Breast epithelium (tissue), 4 donors: ENCODE measurements at regions of chr2 and their contacts with region 1.

Region 1: DNA sequence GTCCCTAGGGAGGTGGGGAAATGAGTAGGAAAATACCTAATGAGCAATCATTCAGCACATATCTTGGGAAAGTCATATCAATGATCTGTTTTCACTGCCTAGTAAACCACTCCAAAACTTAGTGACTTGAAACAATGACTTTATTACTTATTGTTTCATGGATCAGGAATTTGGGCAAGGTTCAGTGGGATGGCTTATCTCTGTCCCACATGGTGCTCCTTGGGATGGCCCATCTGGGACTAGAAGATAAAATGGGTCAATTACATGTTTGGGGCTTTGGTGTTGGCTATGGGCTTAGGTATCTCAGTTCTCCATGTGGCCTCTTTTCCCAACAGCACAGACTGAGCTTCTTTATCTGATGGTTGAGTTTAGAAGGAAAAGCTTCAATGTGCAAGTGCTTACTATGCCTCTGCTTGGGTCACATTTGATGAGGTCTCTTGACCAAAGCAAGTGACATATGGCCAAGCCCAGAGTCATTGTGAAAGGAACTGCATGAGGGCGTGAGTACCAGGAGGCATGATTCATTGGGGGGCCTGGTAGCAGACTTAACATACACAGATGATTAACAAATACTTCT is 218.1 kb upstream of the TNP1 start:
- DNase-seq: no peak
- H3K4me3 ChIP-seq: no peak overlapping the region
- H3K27ac ChIP-seq: no peak overlapping the region
- H3K4me1 ChIP-seq: no peaks in the 10 kb centered on the region
- H3K27me3 ChIP-seq: no peaks in the 10 kb centered on the region
- CTCF ChIP-seq: no peak
- POLR2A ChIP-seq: no peak

Region 2: DNA sequence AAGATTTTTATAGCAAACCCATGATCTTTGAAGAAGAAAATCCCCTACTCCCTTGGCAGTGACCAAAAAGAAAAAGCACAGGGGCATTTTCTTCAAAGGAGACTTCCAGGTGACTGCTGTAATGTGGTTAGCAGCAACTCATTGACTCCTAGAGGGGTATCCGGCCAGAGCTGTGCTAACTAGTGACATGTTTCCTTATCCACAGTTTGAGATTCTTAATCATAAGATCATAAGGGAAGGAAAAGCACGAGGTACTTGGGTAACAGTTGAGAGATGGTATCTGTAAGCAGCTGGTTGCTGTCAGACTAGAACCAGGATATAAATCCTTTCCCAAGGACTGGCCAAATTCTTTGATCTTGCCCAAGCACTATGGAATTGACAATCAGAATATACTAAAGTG is 1189.2 kb before region 1 on chr2:
- intact Hi-C with region 1: no loop called
- DNase-seq: no peak
- H3K4me3 ChIP-seq: no peak overlapping the region
- H3K27ac ChIP-seq: no peak overlapping the region
- H3K4me1 ChIP-seq: no peaks in the 10 kb centered on the region
- H3K27me3 ChIP-seq: no peaks in the 10 kb centered on the region
- CTCF ChIP-seq: no peak
- POLR2A ChIP-seq: no peak

Region 3: DNA sequence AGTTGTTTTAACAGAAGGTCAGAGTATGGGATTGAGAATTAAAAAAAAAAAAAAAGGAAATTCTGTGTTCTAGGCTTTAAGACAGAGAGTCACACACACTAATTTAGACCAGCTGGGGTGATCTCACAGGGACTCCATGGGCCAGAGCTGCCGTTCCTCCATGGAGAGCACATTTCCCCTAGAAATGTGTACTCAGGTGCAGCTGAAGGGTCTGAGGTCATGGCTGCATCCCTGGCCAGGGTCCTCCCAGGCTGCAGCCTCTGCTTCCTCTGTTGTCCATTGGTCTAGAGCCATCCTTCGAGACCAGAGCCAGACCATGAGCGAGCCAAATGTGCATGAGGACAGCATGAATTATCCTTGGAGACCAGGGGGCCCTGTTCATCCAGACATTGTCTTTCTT is 28.0 kb before region 1 on chr2:
- intact Hi-C with region 1: no loop called
- DNase-seq: no peak
- H3K4me3 ChIP-seq: no peak overlapping the region
- H3K27ac ChIP-seq: peak overlapping the region in 1 of 2 donors; percentile 52
- H3K4me1 ChIP-seq: no peaks in the 10 kb centered on the region
- H3K27me3 ChIP-seq: no peaks in the 10 kb centered on the region
- CTCF ChIP-seq: no peak
- POLR2A ChIP-seq: no peak

Region 4: GRCh38 chr2:217099561-217099960 is 21.6 kb after region 1 on chr2:
- intact Hi-C with region 1: loop called (anchors 1 kb)
- DNase-seq: no peak
- H3K4me3 ChIP-seq: no peak overlapping the region
- H3K27ac ChIP-seq: no peak overlapping the region
- H3K4me1 ChIP-seq: no peaks in the 10 kb centered on the region
- H3K27me3 ChIP-seq: no peaks in the 10 kb centered on the region
- CTCF ChIP-seq: no peak
- POLR2A ChIP-seq: no peak